Psoas muscle (tissue), 8 donors: ENCODE measurements at regions of chr15 and their contacts with region 1.

Region 1: DNA sequence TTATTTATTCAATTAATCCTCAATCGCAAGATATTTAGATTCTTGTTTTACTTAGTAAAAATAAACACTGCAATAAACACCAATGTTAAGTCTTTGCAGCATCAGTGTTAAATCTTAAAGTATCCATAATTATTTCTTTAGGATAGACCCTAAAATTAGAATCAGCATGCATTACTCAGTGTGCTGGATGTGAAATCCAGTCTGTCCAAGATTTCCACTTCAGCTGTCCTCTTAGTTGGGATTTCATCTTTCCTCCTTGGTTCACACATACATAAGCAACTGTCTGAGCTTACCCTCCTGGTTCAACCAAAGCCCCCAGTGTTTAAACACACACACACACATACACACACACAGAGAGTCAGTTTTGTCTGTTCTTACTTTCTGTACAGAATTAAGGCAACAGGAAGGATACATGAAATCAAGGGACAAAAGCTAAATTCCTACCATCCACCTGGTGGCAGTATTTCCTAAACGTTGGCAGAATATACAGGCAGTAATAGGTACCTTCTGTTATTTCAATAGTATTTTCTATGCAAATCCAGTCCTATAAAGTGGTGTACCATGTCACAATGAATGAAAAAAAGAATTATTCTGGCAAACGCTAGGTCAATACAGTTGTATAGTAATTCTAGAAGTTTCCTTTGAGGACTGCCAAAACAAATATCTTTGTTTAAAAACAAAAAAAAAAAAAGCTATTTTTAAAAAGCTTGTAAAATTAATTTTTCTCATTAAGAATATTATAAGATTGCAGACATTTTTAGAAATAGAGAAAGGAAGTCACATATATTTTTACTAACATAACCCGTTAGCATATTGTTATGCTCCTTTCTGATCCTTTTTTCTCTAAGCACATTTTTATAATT is 27.3 kb upstream of the DMXL2 start:
- DNase-seq: no peak
- ATAC-seq: peak; percentile 70 to 90 (median 73)
- H3K4me3 ChIP-seq: no peak overlapping the region
- H3K27ac ChIP-seq: no peak overlapping the region
- H3K4me1 ChIP-seq: no peaks in the 10 kb centered on the region
- H3K27me3 ChIP-seq: no peaks in the 10 kb centered on the region
- CTCF ChIP-seq: peak; percentile 83

Region 2: DNA sequence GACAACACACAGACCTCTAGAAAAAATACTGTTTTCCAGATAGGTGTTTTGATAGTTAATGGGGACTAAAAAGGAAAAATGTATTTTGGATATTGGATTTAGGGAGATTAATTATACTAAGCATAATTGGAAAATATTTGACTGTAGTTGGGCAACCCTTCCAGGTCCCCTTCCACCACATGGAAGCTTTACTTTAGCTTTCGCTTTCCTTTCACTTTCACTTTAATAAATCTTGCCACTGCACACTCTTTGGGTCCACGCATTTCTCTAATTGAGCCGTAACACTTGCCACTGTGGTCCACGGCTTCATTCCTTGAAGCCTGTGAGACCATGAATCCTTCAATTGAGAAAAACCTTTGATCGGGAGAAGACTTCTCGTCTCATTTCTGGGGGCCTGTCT is 292.9 kb before region 1 on chr15:
- intact Hi-C with region 1: no loop called
- DNase-seq: no peak
- ATAC-seq: no peak
- H3K4me3 ChIP-seq: no peak overlapping the region
- H3K27ac ChIP-seq: no peak overlapping the region
- H3K4me1 ChIP-seq: no peaks in the 10 kb centered on the region
- H3K27me3 ChIP-seq: no peaks in the 10 kb centered on the region
- CTCF ChIP-seq: no peak

Region 3: DNA sequence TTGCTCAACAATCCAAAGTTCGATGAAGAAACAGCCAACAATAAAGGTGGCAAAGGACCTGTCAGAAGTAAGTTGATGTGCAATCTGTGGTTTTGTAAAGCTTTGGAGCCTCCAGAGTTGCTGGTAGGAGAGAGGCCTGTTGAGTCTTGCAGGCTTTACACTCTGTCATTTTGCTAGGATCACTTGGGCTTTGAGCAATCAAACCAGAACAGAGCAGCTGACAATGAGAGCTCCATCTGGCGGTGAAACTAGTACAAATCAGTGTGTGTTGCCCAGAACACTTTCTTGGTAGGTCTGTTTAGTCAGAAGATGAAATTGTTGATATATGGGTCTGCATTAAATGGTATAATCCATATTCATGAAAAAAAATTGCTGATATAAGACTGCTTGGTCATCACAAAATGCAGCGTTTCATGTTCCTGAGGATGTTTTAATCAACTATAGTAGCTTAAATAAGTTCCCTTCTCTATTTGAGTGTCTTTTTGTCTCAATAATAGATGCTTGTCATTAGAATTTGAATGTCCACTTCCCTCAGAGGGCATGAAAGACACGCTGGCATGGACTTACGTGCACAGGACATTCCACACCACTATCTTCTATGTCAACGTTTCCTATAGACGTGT is 127.2 kb after region 1 on chr15:
- intact Hi-C with region 1: loop called (anchors 1 to 2 kb)
- DNase-seq: peak in 1 of 2 donors; percentile 30
- ATAC-seq: peak; percentile 85 to 98 (median 94)
- H3K4me3 ChIP-seq: no peak overlapping the region
- H3K27ac ChIP-seq: no peak overlapping the region
- H3K4me1 ChIP-seq: no peaks in the 10 kb centered on the region
- H3K27me3 ChIP-seq: no peaks in the 10 kb centered on the region
- CTCF ChIP-seq: peak; percentile 81